ENCODE measurements at regions of chr19 and their contacts with region 1.

Region 1: DNA sequence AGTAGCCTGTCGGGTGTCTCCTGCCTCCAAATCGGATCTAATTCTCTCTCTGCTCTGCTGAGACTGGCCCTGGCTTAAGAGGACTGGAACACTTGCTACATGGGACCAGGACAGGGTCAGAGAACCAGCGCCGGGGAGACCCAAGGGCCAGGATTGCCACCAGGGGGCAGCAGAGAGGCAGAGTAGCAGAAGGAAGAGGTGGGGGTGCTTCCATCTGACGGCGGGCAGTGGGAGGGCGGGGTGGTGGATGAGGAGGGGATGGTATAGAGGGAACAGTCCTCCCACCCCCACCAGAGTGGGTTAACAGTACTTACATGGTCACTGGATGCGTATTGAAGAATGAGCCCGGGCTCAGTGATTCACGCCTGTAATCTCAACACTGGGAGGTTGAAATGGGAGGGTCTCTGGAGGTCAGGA is 11.9 kb downstream of the SELENOW start:
- DNase-seq: peak; percentile 59 to 96 (median 84)

Region 2: GRCh38 chr19:47713046-47714021 is 77.1 kb before region 1 on chr19 and contains the start of gene EHD2:
- intact Hi-C with region 1: loop called (anchors 5 kb)
- DNase-seq: peak in 5 of 10 donors; percentile 41 to 92 (median 59)

Region 3: GRCh38 chr19:47765523-47766358 is 24.7 kb before region 1 on chr19:
- intact Hi-C with region 1: loop called (anchors 1 kb)
- DNase-seq: peak in 9 of 10 donors; percentile 36 to 95 (median 65)

Measured in posterior cingulate gyrus (tissue), 11 donors.